A549 (cell line): ENCODE measurements at regions of chr1 and their contacts with region 1.

Region 1: GRCh38 chr1:1435106-1435903 is at the start of gene VWA1:
- DNase-seq: peak in 1 of 2 experiments; percentile 48
- ATAC-seq: peak; percentile 39 to 40
- H3K4me3 ChIP-seq: peak within 1 kb of the TSS; percentile 67
- H3K27ac ChIP-seq: peak within 1 kb of the TSS; percentile 74 to 94
- H3K4me1 ChIP-seq: peaks cover 53% of the 10 kb centered on the region
- CTCF ChIP-seq: no peak
- EP300 ChIP-seq: no peak
- POLR2A ChIP-seq: peak; percentile 41
- RAD21 ChIP-seq: no peak
- polyA plus RNA-seq, gene VWA1: 3.7 and 4.0 TPM in 2 replicates

Region 2: GRCh38 chr1:1387098-1388077 is 47.9 kb before region 1 on chr1:
- CTCF ChIA-PET with region 1: no interaction called
- POLR2A ChIA-PET with region 1: no interaction called
- DNase-seq: no peak
- ATAC-seq: no peak
- H3K4me3 ChIP-seq: no peak overlapping the region
- H3K27ac ChIP-seq: no peak overlapping the region
- H3K4me1 ChIP-seq: no peaks in the 10 kb centered on the region
- CTCF ChIP-seq: no peak
- EP300 ChIP-seq: no peak
- POLR2A ChIP-seq: no peak
- RAD21 ChIP-seq: no peak

Region 3: DNA sequence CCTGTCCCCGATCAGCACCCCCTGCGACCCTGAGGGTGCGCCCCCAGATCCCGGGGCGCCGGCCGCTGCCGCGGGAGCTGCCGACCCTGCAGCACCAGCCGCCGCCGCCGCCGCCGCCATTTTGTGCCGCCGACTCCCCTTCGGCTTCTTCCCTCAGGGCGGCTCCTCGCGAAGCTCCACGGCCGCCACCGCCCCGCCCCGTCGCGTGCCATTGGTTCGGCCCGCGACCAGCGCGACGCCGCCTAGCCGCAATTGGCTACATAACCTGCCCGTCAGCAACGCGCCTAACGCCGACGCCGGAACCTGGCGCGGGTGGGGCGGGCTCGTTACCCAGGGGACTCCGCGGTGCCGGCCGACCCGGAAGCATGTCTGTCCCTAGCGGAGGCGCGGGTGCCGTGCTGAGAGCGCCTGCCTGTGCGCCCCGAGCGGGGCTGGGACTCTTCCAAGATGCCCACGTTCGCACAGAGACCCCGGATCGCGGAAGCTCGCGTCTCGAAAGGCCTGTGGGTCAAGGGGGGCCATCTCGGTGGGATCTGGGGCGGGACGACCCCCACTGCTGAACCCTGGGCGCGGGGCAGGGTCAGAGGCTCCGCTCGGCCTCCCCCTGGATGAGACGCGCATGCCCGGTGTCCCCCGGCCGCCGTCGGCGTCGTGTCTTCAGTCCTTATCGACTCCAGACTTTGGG is 36.0 kb before region 1 on chr1 and contains the start of gene CCNL2:
- CTCF ChIA-PET with region 1: interaction called, 14 read pairs
- POLR2A ChIA-PET with region 1: interaction called, 3 read pairs
- DNase-seq: peak; percentile 83 to 97
- ATAC-seq: peak; percentile 95 to 96
- H3K4me3 ChIP-seq: peak within 1 kb of the TSS; percentile 96
- H3K27ac ChIP-seq: peak within 1 kb of the TSS; percentile 93 to 99
- H3K4me1 ChIP-seq: peaks cover 29% of the 10 kb centered on the region
- CTCF ChIP-seq: 0 out of 3 replicates have a peak, but pooled peaks have one; percentile 7
- EP300 ChIP-seq: no peak
- POLR2A ChIP-seq: peak; percentile 60
- RAD21 ChIP-seq: no peak
- polyA plus RNA-seq, gene CCNL2: 111 TPM in 2 replicates

Region 4: DNA sequence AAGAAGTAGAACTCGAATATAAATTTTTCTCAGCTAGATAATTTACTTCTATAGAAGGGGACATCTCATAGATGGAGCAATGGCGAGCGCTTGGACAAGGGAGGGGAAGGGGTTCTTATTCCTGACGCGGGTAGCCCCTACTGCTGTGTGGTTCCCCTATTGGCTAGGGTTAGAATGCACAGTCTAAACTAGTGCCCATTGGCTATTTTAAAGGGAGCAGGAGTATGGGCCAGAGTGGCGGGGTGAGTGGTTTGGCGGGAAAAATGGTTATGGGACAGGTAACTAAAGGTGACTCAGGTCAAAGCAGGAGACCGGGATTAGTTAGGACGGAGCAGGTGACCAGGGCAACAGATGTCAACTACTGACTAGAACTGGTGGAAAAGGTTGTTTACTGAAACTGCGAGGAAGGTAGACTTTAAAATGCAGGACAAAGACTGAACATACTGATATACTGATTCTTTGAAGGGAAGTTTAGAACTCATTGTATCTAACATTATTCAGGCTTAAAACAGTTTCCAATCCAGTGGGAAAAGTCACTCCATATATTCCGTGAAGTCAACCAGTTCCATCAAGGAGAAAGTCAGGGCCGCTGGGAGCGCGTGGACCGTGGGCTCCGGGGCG is 75.7 kb after region 1 on chr1:
- CTCF ChIA-PET with region 1: interaction called, 162 read pairs
- POLR2A ChIA-PET with region 1: no interaction called
- DNase-seq: peak in 1 of 2 experiments; percentile 38
- ATAC-seq: peak in 1 of 2 experiments; percentile 42; a peak in 5 of 6 replicates
- H3K4me3 ChIP-seq: peak overlapping the region; percentile 98
- H3K27ac ChIP-seq: peak overlapping the region; percentile 97 to 99
- H3K4me1 ChIP-seq: peaks cover 5% of the 10 kb centered on the region; the same call in 2 of the 3 replicates
- CTCF ChIP-seq: no peak
- EP300 ChIP-seq: no peak
- POLR2A ChIP-seq: no peak
- RAD21 ChIP-seq: no peak